AG04450 (cell line): ENCODE measurements at regions of chr5 and their contacts with region 1.

Region 1: DNA sequence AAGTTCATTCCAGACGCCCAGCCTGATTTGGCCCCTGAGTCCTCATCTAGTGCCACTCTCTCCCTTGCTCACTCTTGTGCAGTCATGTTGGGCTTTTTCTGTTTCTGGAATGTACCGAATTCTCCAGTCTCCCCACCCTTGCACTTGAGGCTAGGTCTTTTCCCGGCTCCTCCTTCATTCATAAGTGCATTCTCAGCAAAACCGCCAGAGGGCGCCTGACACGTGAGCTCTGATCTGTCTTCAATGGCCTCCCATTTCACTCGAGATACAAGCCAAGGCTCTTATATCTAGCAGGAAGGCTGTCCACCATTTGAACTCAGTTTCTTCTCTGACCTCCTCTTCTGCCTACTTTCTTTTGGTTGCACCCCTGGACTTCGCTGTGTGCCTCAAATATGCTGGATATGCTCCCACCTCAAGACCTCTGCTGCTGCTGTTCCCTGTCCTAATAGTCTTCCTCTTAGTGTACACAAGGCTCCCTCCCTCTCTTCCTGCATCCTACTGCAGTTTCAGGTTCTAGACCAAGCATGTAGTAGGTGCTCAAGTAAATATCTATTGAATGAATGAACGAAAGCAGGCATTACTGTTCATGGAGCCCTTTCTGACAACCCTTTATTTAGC is 568.1 kb upstream of the WWC1 start:
- DNase-seq: peak; percentile 46
- H3K4me3 ChIP-seq: no peak overlapping the region
- H3K27ac ChIP-seq: no peak overlapping the region
- H3K27me3 ChIP-seq: no peaks in the 10 kb centered on the region
- CTCF ChIP-seq: peak; percentile 92

Region 2: GRCh38 chr5:167699434-167699833 is 23.9 kb before region 1 on chr5:
- CTCF ChIA-PET with region 1: interaction called, 14 read pairs
- POLR2A ChIA-PET with region 1: no interaction called
- DNase-seq: peak; percentile 96
- H3K4me3 ChIP-seq: no peak overlapping the region
- H3K27ac ChIP-seq: peak overlapping the region; percentile 80
- H3K27me3 ChIP-seq: no peaks in the 10 kb centered on the region
- CTCF ChIP-seq: no peak

Region 3: GRCh38 chr5:167743685-167744464 is 20.5 kb after region 1 on chr5:
- CTCF ChIA-PET with region 1: interaction called, 32 read pairs
- POLR2A ChIA-PET with region 1: no interaction called
- DNase-seq: peak; percentile 70
- H3K4me3 ChIP-seq: no peak overlapping the region
- H3K27ac ChIP-seq: no peak overlapping the region
- H3K27me3 ChIP-seq: no peaks in the 10 kb centered on the region
- CTCF ChIP-seq: no peak

Region 4: DNA sequence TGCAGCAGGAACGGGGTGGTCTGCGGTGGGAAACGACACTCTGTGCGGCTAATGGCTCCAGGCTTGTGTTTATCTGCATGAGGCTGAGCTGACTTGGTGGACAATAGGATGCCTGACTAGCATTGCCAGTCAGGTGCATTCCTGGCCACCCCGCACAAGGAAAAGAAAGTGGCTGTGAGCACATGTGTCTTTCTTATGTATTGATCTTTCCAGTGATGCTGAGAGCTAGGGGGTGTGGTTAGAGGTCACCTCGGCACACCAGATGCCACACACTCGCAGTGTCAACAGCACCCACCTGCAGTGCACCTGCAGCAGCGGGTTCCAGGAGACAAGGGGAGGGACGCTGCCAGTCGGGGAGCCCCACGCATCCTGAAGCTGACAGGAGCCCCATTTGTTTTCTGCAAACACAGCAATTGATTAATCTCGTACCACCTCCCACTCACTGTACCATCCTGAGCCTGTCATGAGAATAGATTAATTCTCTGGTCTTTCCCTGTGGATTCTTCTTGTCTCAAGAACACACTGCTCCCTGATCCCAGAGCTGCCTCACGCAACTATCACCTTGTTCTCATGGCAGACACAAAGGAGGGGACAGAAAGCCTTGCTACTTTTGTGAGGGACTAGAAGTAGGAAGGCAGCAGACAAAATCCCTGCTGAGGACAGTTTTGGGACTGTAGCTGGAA is 316.3 kb after region 1 on chr5:
- CTCF ChIA-PET with region 1: no interaction called
- POLR2A ChIA-PET with region 1: no interaction called
- DNase-seq: no peak
- H3K4me3 ChIP-seq: no peak overlapping the region
- H3K27ac ChIP-seq: no peak overlapping the region
- H3K27me3 ChIP-seq: peaks cover 2% of the 10 kb centered on the region
- CTCF ChIP-seq: no peak